ENCODE measurements at regions of chr10 and their contacts with region 1.

Region 1: GRCh38 chr10:27143686-27144085 is 10.5 kb downstream of the YME1L1 start:
- DNase-seq: no peak
- ATAC-seq: no peak
- H3K4me3 ChIP-seq: no peak overlapping the region
- H3K27ac ChIP-seq: no peak overlapping the region
- H3K4me1 ChIP-seq: no peaks in the 10 kb centered on the region; a peak in 1 of 5 replicates
- H3K27me3 ChIP-seq: no peaks in the 10 kb centered on the region
- CTCF ChIP-seq: no peak
- EP300 ChIP-seq: no peak
- POLR2A ChIP-seq: no peak
- RAD21 ChIP-seq: no peak

Region 2: GRCh38 chr10:27155066-27155754 is 11.5 kb after region 1 on chr10 and contains the start of gene MASTL:
- CTCF ChIA-PET with region 1: no interaction called
- POLR2A ChIA-PET with region 1: interaction called, 12 read pairs
- in situ Hi-C with region 1: no loop called
- intact Hi-C with region 1: no loop called
- DNase-seq: peak; percentile 92 to 96 (median 94)
- ATAC-seq: peak; percentile 90
- H3K4me3 ChIP-seq: peak within 1 kb of the TSS; percentile 70
- H3K27ac ChIP-seq: peak within 1 kb of the TSS; percentile 98
- H3K4me1 ChIP-seq: peaks cover 7 to 16% of the 10 kb centered on the region in 2 experiments; a peak in 4 of 5 replicates
- H3K27me3 ChIP-seq: no peaks in the 10 kb centered on the region
- CTCF ChIP-seq: no peak
- EP300 ChIP-seq: no peak
- POLR2A ChIP-seq: peak; percentile 88
- RAD21 ChIP-seq: no peak
- polyA plus RNA-seq, gene MASTL: 6.8 to 8.0 TPM